HCT116 (cell line): ENCODE measurements at regions of chr1 and their contacts with region 1.

Region 1: DNA sequence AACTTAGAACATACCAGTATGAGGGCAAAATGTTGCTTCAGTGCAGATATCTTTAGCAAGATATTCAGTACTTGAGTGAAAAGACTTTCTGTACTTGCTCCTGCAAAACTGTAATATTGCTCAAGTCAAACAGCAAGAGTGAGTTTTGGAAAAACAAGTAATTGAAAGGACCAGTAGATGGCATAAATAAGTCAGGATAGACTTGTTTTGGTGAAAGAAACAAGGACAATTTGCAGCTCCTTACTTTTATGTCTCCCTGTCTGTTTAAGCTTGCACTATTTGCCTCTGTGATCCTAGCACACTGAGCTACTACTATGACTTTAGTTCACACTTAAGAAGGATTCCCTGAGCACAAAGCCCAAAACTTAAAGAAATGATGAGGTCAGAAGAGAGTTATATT is 39.1 kb downstream of the IFI44 start:
- DNase-seq: no peak
- ATAC-seq: no peak
- H3K4me3 ChIP-seq: no peak overlapping the region
- H3K27ac ChIP-seq: no peak overlapping the region
- H3K4me1 ChIP-seq: no peaks in the 10 kb centered on the region
- H3K27me3 ChIP-seq: no peaks in the 10 kb centered on the region
- CTCF ChIP-seq: peak in 1 of 3 experiments; percentile 27; a peak in 1 of 6 replicates
- POLR2A ChIP-seq: no peak
- RAD21 ChIP-seq: peak; percentile 49

Region 2: DNA sequence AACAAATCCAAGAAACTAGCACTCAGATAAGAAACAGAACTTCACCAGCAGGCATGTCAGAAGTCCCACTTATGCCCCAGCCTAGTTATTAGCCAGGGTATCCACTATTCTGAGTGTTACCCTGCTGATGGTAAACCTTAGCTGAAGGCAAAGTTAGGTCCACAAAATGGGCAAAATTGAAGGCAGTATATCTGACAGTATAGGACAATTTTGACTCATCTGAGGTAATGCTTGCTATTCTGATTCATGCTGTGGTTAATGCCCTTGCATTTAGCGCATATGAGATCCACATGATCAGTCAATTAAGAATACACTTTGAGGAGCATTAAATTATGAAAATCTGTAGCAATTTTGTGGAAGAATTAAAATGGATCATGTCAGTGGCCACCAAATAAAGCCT is 23.9 kb before region 1 on chr1:
- CTCF ChIA-PET with region 1: no interaction called
- POLR2A ChIA-PET with region 1: no interaction called
- RAD21 ChIA-PET with region 1: no interaction called
- intact Hi-C with region 1: no loop called
- DNase-seq: no peak
- ATAC-seq: no peak
- H3K4me3 ChIP-seq: no peak overlapping the region
- H3K27ac ChIP-seq: no peak overlapping the region
- H3K4me1 ChIP-seq: no peaks in the 10 kb centered on the region
- H3K27me3 ChIP-seq: no peaks in the 10 kb centered on the region
- CTCF ChIP-seq: no peak
- POLR2A ChIP-seq: no peak
- RAD21 ChIP-seq: no peak

Region 3: DNA sequence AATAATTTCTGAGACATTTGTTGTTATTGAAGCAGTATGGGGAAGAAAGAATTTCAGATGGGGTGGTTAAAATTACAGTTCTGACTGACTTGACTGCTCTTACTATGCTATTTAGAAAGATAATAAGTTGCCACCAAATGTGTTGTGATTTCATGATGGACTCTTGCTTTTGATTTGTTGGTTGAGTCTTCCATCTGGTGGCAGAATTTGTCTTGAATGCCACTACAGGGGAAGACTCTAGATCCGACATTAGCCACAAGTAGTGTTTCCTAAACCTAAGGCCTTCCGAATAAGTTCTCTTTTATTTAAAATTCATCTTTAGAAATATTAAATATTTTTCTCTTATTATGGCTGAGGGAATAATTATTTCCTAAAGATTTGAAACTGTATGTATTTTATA is 508.7 kb after region 1 on chr1:
- CTCF ChIA-PET with region 1: no interaction called
- POLR2A ChIA-PET with region 1: no interaction called
- RAD21 ChIA-PET with region 1: no interaction called
- intact Hi-C with region 1: loop called (anchors 5 kb)
- DNase-seq: peak; percentile 22
- ATAC-seq: no peak
- H3K4me3 ChIP-seq: no peak overlapping the region
- H3K27ac ChIP-seq: no peak overlapping the region
- H3K4me1 ChIP-seq: peaks cover 3 to 15% of the 10 kb centered on the region in 2 experiments
- H3K27me3 ChIP-seq: no peaks in the 10 kb centered on the region
- CTCF ChIP-seq: peak in 2 of 3 experiments; percentile 20 to 33; a peak in 2 of 6 replicates
- POLR2A ChIP-seq: no peak
- RAD21 ChIP-seq: peak; percentile 58